HCT116 (cell line): ENCODE measurements at regions of chr2 and their contacts with region 1.

Region 1: GRCh38 chr2:84905181-84906107 is at the start of gene TMSB10:
- DNase-seq: no peak
- ATAC-seq: peak; percentile 59
- H3K4me3 ChIP-seq: peak within 1 kb of the TSS; percentile 94
- H3K27ac ChIP-seq: peak within 1 kb of the TSS; percentile 96
- H3K4me1 ChIP-seq: peaks cover 16 to 33% of the 10 kb centered on the region in 2 experiments
- H3K27me3 ChIP-seq: no peaks in the 10 kb centered on the region
- CTCF ChIP-seq: no peak
- POLR2A ChIP-seq: peak; percentile 97
- RAD21 ChIP-seq: no peak
- total RNA-seq, gene TMSB10: 2,677 TPM

Region 2: DNA sequence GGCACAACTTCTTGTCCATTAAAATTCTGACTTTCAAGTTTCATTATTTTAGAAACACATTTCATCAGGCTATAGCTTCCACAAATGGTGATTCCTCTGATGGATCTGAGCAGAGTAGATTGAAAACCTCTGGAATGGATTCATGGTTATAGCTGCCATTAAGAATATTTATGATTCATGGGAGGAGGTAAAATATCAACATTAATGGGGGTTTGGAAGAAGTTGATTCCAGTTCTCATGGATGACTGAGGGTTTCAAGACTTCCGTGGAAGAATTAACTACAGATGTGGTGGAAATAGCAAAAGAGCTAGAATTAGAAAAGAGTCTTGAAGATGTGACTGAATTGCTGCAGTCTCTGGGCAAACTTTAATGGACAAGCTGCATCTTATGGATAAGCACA is 1243.7 kb before region 1 on chr2:
- CTCF ChIA-PET with region 1: no interaction called
- POLR2A ChIA-PET with region 1: no interaction called
- RAD21 ChIA-PET with region 1: no interaction called
- intact Hi-C with region 1: no loop called
- DNase-seq: no peak
- ATAC-seq: no peak
- H3K4me3 ChIP-seq: no peak overlapping the region
- H3K27ac ChIP-seq: no peak overlapping the region
- H3K4me1 ChIP-seq: no peaks in the 10 kb centered on the region
- H3K27me3 ChIP-seq: no peaks in the 10 kb centered on the region
- CTCF ChIP-seq: no peak
- POLR2A ChIP-seq: no peak
- RAD21 ChIP-seq: no peak

Region 3: DNA sequence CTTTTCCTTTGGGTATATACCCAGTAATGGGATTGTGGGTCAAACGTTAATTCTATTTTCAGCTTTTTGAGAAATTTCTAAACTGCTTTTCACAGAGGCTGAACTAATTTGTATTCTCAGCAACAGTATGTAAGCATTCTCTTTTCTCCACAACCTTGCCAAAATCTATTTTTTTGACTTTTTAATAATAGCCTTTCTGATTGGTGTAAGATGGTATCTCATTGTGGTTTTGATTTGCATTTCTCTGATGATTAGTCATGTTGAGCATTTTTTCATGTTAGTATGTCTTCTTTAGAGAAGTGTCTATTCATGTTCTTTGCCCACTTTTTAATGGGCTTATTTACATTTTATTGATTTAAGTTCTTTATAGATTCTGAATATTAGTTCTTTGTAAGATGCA is 170.1 kb before region 1 on chr2:
- CTCF ChIA-PET with region 1: no interaction called
- POLR2A ChIA-PET with region 1: no interaction called
- RAD21 ChIA-PET with region 1: no interaction called
- intact Hi-C with region 1: no loop called
- DNase-seq: no peak
- ATAC-seq: no peak
- H3K4me3 ChIP-seq: no peak overlapping the region
- H3K27ac ChIP-seq: no peak overlapping the region
- H3K4me1 ChIP-seq: no peaks in the 10 kb centered on the region
- H3K27me3 ChIP-seq: no peaks in the 10 kb centered on the region
- CTCF ChIP-seq: no peak
- POLR2A ChIP-seq: no peak
- RAD21 ChIP-seq: no peak

Region 4: GRCh38 chr2:84894131-84894586 is 11.3 kb before region 1 on chr2:
- CTCF ChIA-PET with region 1: no interaction called
- POLR2A ChIA-PET with region 1: interaction called, 20 read pairs
- RAD21 ChIA-PET with region 1: no interaction called
- intact Hi-C with region 1: no loop called
- DNase-seq: no peak
- ATAC-seq: peak; percentile 69; the same call in 1 of the 2 replicates
- H3K4me3 ChIP-seq: no peak overlapping the region
- H3K27ac ChIP-seq: no peak overlapping the region
- H3K4me1 ChIP-seq: peaks cover 0 to 29% of the 10 kb centered on the region in 2 experiments; a peak in 2 of 4 replicates
- H3K27me3 ChIP-seq: no peaks in the 10 kb centered on the region
- CTCF ChIP-seq: no peak
- POLR2A ChIP-seq: no peak
- RAD21 ChIP-seq: no peak

Region 5: DNA sequence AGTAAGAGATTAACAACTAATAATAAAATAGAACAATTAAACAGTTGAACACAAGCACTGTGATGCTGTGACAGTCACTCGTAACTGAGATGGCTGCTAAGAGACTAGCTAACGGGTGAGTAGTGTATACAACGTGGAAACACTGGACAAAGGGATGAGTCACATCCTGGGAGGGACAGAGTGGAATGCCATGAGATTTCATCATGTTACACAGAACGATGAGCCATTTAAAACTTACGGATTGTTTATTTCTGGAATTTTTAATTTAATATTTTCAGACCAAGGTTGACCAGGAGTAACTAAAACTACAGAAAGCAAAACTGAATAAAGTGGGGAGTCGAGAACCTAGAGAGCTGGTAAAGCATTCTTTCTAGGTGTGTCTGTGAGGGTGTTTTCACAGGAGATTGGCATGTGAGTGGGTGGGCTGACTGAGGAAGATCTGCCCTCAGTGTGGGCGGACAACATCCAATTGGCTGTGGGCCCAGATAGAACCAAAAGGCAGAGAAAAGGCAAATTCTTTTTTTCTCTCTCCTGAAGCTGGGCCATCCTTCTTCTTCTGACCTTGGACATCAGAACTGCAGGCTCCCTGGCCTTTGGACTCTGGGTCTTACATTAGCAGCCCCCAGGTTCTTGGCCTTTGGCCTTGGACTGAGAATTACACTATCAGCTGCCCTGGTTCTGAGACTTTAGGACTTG is 14.6 kb after region 1 on chr2:
- CTCF ChIA-PET with region 1: interaction called, 21 read pairs
- POLR2A ChIA-PET with region 1: interaction called, 163 read pairs
- RAD21 ChIA-PET with region 1: interaction called, 3 to 5 read pairs
- intact Hi-C with region 1: loop called (anchors 1 kb)
- DNase-seq: peak; percentile 94
- ATAC-seq: peak; percentile 91
- H3K4me3 ChIP-seq: peak overlapping the region; percentile 12 to 41
- H3K27ac ChIP-seq: peak overlapping the region; percentile 87
- H3K4me1 ChIP-seq: peaks cover 23 to 45% of the 10 kb centered on the region in 2 experiments
- H3K27me3 ChIP-seq: no peaks in the 10 kb centered on the region
- CTCF ChIP-seq: no peak
- POLR2A ChIP-seq: peak; percentile 66
- RAD21 ChIP-seq: no peak

Region 6: DNA sequence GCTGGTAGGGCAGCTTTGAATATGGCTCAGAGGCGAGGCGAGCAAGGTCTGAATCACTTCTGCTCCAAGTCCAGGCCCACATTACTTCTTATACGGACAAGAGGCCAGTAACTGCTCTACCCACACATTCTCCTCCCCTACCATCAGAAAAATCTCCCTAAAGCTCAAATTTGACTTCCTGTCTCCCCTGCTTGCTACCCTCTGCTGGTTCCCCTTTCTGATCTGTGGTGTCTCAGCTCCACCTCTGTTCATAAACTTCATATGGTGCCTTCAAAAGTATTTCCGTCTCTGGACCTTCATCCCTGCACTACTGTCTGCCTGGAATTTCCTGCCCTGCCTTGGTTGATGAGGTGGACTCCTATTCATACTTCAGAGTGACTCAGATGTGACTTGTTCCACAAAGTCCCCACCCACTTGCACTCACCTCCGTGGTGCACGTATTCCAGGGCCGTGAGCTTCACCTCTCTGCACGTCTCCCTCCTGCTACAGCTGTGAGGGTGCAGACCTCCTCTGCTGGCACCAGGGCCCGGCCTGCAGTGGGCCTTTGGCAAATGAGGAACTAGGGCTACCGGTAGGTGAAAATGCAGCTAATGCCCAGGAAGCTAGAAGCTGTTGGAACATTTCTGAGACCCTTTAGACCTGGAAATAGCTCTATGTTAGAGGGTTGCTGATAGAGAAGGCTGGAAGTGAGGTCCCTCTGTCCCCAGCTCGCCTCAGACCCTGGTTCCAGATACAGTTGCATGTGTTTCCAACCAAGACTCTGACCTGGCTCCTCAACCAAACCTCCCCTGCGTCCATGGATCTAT is 41.0 kb after region 1 on chr2:
- CTCF ChIA-PET with region 1: no interaction called
- POLR2A ChIA-PET with region 1: interaction called, 11 read pairs
- RAD21 ChIA-PET with region 1: no interaction called
- intact Hi-C with region 1: no loop called
- DNase-seq: peak; percentile 96
- ATAC-seq: peak; percentile 94
- H3K4me3 ChIP-seq: peak overlapping the region; percentile 35 to 54
- H3K27ac ChIP-seq: peak overlapping the region; percentile 99
- H3K4me1 ChIP-seq: peaks cover 30 to 62% of the 10 kb centered on the region in 2 experiments
- H3K27me3 ChIP-seq: no peaks in the 10 kb centered on the region
- CTCF ChIP-seq: no peak
- POLR2A ChIP-seq: peak; percentile 26
- RAD21 ChIP-seq: no peak